ENCODE measurements at regions of chr2 and their contacts with region 1.

Region 1: GRCh38 chr2:45778720-45779171 is 127.3 kb downstream of the PRKCE start:
- DNase-seq: peak; percentile 82
- H3K4me3 ChIP-seq: no peak overlapping the region
- H3K27ac ChIP-seq: no peak overlapping the region
- H3K4me1 ChIP-seq: peaks cover 18% of the 10 kb centered on the region
- CTCF ChIP-seq: peak; percentile 93

Region 2: DNA sequence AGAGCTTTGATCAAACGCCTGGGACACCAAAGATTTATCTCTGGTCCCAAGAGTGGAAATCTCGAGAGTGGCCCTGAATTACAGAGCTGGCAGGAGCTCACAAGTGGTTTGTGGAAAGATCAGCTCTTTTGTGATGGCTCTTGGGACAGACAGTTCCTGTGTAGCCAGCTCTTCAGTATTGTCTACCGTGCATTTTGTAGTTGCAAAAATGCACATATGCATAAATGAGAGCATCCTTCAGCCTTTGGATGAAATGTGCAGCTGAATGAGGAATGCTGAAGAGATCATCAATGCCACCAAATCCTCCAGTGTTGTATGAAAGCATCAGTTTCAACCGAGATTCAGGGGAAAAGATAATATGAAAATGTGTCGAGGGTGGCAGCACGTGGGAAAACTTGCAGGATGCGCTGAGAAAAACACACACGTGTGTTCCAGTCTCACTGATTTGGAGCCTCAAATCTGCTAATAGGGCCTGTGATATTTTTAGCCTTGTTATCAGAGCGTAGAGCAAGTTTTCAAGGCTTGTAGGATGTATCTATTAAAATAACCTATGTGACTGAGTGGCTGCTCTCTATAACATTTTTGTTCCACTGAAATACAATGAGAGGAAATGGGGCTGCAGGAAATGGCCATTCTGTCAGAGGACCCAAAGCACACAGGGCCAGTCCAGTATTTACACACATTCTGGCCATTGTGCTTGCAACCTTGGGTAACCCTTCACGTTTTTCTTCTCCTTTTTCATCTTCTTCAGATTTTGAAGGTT is 11.4 kb after region 1 on chr2:
- CTCF ChIA-PET with region 1: interaction called, 5 read pairs
- POLR2A ChIA-PET with region 1: interaction called, 10 read pairs
- intact Hi-C with region 1: no loop called
- DNase-seq: no peak
- H3K4me3 ChIP-seq: no peak overlapping the region
- H3K27ac ChIP-seq: no peak overlapping the region
- H3K4me1 ChIP-seq: peaks cover 18% of the 10 kb centered on the region
- CTCF ChIP-seq: no peak

Region 3: DNA sequence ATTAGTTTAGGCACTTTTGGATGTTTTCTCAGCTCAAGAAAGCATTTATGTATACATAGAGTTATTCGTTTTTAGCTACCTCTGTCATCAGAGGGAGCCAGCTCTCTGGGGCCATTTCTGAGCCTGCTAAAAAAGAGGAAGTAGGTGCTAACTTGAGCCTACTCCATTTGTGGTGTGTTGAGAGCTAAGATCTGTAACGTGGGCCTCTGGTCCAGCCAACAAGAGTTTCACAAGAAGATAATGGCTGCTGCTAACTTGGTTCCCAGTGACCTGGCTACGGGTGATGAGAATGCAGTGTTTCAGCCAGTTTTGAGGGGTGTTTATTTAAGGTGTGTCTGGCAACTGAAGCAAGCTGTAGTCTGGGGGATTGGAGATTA is 55.2 kb after region 1 on chr2:
- CTCF ChIA-PET with region 1: interaction called, 5 read pairs
- POLR2A ChIA-PET with region 1: interaction called, 4 read pairs
- intact Hi-C with region 1: loop called (anchors 2 kb)
- DNase-seq: peak; percentile 86
- H3K4me3 ChIP-seq: peak overlapping the region; percentile 32
- H3K27ac ChIP-seq: peak overlapping the region; percentile 83
- H3K4me1 ChIP-seq: peaks cover 57% of the 10 kb centered on the region
- CTCF ChIP-seq: no peak

Region 4: GRCh38 chr2:45935791-45936622 is 157.3 kb after region 1 on chr2:
- CTCF ChIA-PET with region 1: no interaction called
- POLR2A ChIA-PET with region 1: no interaction called
- intact Hi-C with region 1: loop called (anchors 5 kb)
- DNase-seq: peak; percentile 68
- H3K4me3 ChIP-seq: no peak overlapping the region
- H3K27ac ChIP-seq: no peak overlapping the region
- H3K4me1 ChIP-seq: peaks cover 5% of the 10 kb centered on the region
- CTCF ChIP-seq: peak; percentile 78

Measured in OCI-LY7 (cell line).